ENCODE measurements at regions of chr18 and their contacts with region 1.

Region 1: DNA sequence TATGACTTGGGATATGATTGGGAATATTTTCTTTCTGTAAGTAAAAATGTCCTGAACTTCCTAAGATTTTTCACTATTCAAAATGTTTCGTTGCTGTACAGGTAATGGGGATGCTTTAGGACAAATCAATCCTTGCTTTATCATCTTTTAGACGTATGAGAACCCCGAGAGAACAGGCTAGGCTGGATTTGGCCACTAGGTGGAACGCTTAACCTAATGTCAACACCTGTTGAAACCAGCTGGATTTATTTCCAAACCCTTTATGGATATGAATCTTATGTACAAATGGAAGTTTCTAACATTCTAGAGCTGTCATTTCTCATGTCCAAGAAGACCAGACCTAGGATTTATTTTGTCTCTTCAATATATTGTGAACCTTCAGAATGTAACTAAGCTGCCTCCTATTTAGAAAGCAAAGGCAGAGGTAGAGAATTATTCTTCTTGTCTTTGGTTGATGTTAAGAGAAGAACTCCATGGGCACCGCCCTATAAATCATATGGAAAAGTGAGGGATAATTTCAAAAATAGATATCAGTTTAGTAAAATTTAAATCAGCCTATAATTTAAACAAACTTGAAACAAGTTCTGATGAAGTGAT is 96.7 kb downstream of the PMAIP1 start:
- DNase-seq: no peak
- H3K4me3 ChIP-seq: no peak overlapping the region
- H3K27ac ChIP-seq: no peak overlapping the region
- H3K4me1 ChIP-seq: no peaks in the 10 kb centered on the region
- H3K27me3 ChIP-seq: no peaks in the 10 kb centered on the region
- CTCF ChIP-seq: peak in 2 of 3 experiments; percentile 63 to 72; a peak in 3 of 4 replicates
- EP300 ChIP-seq: no peak
- POLR2A ChIP-seq: no peak
- RAD21 ChIP-seq: peak; percentile 81 to 86

Region 2: DNA sequence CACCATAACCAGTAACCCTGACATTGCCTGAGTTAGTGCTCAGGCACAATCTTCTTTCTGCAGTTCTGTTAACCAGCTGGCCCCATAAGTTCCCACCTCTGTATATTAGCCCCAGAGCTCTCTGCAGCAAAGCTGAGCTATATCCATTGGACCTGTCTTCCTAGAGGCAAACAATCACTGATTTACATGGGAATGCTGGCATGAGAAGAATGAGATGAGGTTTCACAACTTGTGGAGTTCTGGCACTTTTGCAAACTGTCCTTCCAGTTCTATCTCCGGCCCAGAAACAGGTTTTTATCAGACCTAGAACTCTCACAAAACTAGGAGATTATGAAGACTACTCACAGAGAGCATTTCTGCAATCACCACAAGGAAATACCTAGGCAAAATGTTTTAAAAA is 291.3 kb before region 1 on chr18:
- CTCF ChIA-PET with region 1: no interaction called
- POLR2A ChIA-PET with region 1: no interaction called
- DNase-seq: no peak
- H3K4me3 ChIP-seq: no peak overlapping the region
- H3K27ac ChIP-seq: no peak overlapping the region
- H3K4me1 ChIP-seq: peaks cover 1 to 12% (median 7%) of the 10 kb centered on the region in 4 experiments; a peak in 5 of 7 replicates
- H3K27me3 ChIP-seq: no peaks in the 10 kb centered on the region
- CTCF ChIP-seq: no peak
- EP300 ChIP-seq: no peak
- POLR2A ChIP-seq: no peak
- RAD21 ChIP-seq: no peak

Region 3: GRCh38 chr18:59837586-59837985 is 158.9 kb before region 1 on chr18:
- CTCF ChIA-PET with region 1: interaction called, 18 read pairs
- POLR2A ChIA-PET with region 1: no interaction called
- DNase-seq: peak in 1 of 2 experiments; percentile 36
- H3K4me3 ChIP-seq: no peak overlapping the region
- H3K27ac ChIP-seq: no peak overlapping the region
- H3K4me1 ChIP-seq: peaks cover 0 to 15% (median 7%) of the 10 kb centered on the region in 4 experiments; a peak in 5 of 7 replicates
- H3K27me3 ChIP-seq: no peaks in the 10 kb centered on the region
- CTCF ChIP-seq: peak in 2 of 3 experiments; percentile 85 to 90; a peak in 3 of 4 replicates
- EP300 ChIP-seq: 0 out of 3 replicates have a peak, but pooled peaks of 1 of the 2 experiments have one; percentile 45
- POLR2A ChIP-seq: no peak
- RAD21 ChIP-seq: peak; percentile 86 to 93

Region 4: DNA sequence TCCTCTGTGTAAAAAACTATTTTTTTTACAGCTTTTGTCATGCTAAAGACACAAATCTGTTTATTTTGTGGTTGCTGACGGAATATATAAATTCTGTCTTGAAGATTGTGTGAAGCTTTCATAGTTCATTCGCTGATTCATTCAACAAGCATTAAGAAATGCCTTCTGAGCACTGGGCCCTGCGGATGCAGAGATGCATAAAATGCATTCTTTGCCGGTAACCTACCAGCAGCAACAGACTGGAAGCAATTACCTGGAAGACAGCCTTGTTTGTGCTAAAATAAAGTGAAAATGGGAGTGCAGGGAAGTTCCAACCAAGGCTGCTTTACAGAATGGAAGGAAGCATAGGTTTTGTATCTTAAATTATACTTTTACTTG is 23.0 kb after region 1 on chr18:
- CTCF ChIA-PET with region 1: interaction called, 15 read pairs
- POLR2A ChIA-PET with region 1: interaction called, 3 read pairs
- DNase-seq: no peak
- H3K4me3 ChIP-seq: no peak overlapping the region
- H3K27ac ChIP-seq: no peak overlapping the region
- H3K4me1 ChIP-seq: peaks cover 0 to 10% (median 0%) of the 10 kb centered on the region in 4 experiments; a peak in 3 of 7 replicates
- H3K27me3 ChIP-seq: peaks cover 0 to 1% (median 0%) of the 10 kb centered on the region in 4 experiments; a peak in 1 of 7 replicates
- CTCF ChIP-seq: no peak
- EP300 ChIP-seq: no peak
- POLR2A ChIP-seq: no peak
- RAD21 ChIP-seq: no peak

Region 5: DNA sequence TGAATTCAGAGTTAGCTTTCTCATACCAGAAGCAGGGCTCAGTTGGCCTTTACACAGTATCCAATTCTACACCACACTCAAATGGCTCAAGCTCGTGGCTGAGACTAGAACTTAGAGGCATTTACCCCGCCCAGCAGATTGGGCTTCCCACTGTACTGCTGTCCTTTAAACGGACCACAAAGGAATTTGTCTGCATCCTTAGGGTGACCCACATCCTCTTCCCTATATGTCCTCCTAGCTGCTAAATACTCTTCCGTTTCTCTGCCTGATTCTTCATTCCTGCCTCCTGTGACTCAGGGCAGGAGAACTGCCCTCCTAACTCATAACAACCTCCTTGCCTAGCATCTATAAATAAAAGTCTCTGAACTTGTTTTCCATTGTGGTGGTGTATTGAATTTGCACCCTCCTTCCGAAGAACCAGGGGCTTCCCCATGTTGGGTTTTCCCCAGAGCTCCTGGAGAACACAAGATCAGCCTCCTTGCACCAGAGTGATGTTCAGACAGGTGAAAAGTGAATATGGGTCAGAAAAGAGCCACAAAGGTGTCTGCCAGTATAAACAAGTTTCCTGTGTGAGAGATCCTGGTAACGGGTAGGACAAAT is 408.1 kb after region 1 on chr18:
- CTCF ChIA-PET with region 1: interaction called, 10 read pairs
- POLR2A ChIA-PET with region 1: no interaction called
- DNase-seq: no peak
- H3K4me3 ChIP-seq: no peak overlapping the region
- H3K27ac ChIP-seq: no peak overlapping the region
- H3K4me1 ChIP-seq: no peaks in the 10 kb centered on the region; a peak in 1 of 7 replicates
- H3K27me3 ChIP-seq: no peaks in the 10 kb centered on the region
- CTCF ChIP-seq: no peak
- EP300 ChIP-seq: no peak
- POLR2A ChIP-seq: no peak
- RAD21 ChIP-seq: no peak

Region 6: GRCh38 chr18:60549338-60549960 is 553.0 kb after region 1 on chr18:
- CTCF ChIA-PET with region 1: interaction called, 61 read pairs
- POLR2A ChIA-PET with region 1: no interaction called
- DNase-seq: peak in 1 of 2 experiments; percentile 15
- H3K4me3 ChIP-seq: no peak overlapping the region
- H3K27ac ChIP-seq: no peak overlapping the region
- H3K4me1 ChIP-seq: no peaks in the 10 kb centered on the region
- H3K27me3 ChIP-seq: no peaks in the 10 kb centered on the region
- CTCF ChIP-seq: peak in 2 of 3 experiments; percentile 41 to 65; a peak in 2 of 4 replicates
- EP300 ChIP-seq: no peak
- POLR2A ChIP-seq: no peak
- RAD21 ChIP-seq: peak; percentile 80 to 88